T-cell (primary cell): ENCODE measurements at regions of chr19 and their contacts with region 1.

Region 1: DNA sequence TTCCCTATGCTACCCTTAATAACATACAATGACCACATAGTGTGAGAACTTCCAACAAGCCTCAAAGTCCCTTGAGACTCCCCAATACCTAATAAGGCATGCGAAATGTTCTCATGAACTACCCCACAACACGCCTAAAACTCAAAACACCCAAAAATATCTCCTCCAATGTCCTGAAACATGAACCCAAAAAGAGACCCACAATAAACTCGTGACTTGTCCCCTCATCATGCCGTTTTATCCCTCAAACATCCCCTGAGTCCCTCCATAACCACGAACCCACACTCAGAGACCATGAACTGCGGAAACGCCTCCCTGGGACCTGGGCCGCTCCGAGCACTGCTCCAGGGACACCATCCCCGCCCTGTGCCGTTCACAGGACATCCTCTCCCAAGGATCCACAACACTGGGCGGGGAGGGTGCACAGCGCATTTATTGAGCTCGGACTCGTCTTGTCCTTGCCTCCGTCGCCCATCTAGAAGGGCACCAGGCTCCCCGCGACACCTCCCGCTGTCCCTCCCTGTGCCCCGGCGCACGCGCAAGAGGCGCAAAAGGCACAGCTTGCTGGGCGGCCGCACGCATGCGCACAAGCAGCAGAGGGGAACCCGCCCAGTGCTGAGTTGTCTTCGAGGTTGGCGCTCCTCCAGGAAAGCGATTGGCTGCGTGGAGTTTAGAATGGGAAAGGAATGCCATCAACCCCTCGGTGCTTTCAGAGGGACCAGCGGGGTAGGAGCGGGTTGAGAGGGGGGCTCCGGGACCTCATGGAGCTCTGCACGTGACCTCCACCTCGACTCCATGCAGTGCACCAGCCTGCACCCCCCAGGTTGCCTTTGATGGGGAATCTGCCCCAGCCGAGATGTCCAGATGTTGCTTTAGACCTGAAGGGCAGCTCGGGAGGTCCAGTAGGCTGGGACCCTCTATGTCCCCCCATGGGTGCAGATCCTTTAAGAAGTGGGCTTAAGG is 8.8 kb downstream of the FXYD3 start:
- DNase-seq: peak; percentile 62 to 87 (median 78)
- ATAC-seq: peak; percentile 93 to 98 (median 97)
- H3K4me3 ChIP-seq: peak overlapping the region; percentile 35 to 65
- H3K4me3 Mint-ChIP-seq: peak overlapping the region; percentile 79 to 87 (median 81)
- H3K27ac ChIP-seq: peak overlapping the region; percentile 3
- H3K27ac Mint-ChIP-seq: peak overlapping the region; percentile 82 to 86
- H3K4me1 ChIP-seq: peaks cover 0 to 12% of the 10 kb centered on the region in 2 experiments
- H3K4me1 Mint-ChIP-seq: peaks cover 14 to 18% (median 14%) of the 10 kb centered on the region in 3 donors
- H3K27me3 ChIP-seq: peaks cover 0 to 5% of the 10 kb centered on the region in 2 experiments
- H3K27me3 Mint-ChIP-seq: no peaks in the 10 kb centered on the region

Region 2: DNA sequence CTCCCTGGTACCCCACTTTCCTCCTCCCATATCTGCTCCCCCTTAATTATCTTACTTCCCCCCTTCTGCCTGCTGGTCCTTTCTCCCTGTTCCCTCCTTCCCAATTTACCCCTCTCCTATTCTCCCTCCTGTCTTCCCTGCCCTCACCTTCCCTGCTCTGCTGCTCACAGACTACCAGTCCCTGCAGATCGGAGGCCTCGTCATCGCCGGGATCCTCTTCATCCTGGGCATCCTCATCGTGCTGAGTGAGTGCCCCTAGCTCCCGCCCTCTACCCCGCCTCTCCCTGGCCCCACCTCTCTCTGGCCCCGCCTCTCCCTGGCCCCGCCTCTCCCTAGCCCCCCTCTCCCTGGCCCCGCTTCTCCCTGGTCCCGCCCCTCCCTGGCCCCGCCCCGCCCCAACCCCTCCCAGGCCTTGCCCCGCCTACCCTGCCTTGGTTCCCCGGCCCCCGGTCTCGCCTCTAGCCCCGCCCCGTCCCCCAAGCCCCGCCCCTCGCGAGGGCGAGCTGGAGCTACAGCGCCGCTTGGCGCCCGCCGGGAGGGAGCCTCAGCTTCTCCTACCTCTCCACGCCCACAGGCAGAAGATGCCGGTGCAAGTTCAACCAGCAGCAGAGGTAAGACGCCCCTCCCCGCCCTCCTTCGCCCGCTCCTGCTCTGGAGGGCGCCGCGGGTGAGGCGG is 16.7 kb after region 1 on chr19:
- CTCF ChIA-PET with region 1: interaction called, 4 to 18 read pairs
- POLR2A ChIA-PET with region 1: no interaction called
- DNase-seq: peak; percentile 89 to 97 (median 94)
- ATAC-seq: peak; percentile 82 to 89 (median 87)
- H3K4me3 ChIP-seq: peak overlapping the region; percentile 48 to 60
- H3K4me3 Mint-ChIP-seq: peak overlapping the region; percentile 81 to 85 (median 83)
- H3K27ac ChIP-seq: no peak overlapping the region
- H3K27ac Mint-ChIP-seq: peak overlapping the region; percentile 64 to 79
- H3K4me1 ChIP-seq: peaks cover 13 to 50% of the 10 kb centered on the region in 2 experiments
- H3K4me1 Mint-ChIP-seq: peaks cover 38 to 47% (median 40%) of the 10 kb centered on the region in 3 donors
- H3K27me3 ChIP-seq: peaks cover 0 to 29% of the 10 kb centered on the region in 2 experiments
- H3K27me3 Mint-ChIP-seq: peaks cover 0 to 3% of the 10 kb centered on the region in 2 donors

Region 3: GRCh38 chr19:35213663-35214632 is 89.6 kb after region 1 on chr19:
- CTCF ChIA-PET with region 1: no interaction called
- POLR2A ChIA-PET with region 1: no interaction called
- DNase-seq: peak; percentile 47 to 97 (median 79)
- ATAC-seq: peak; percentile 45 to 59 (median 50)
- H3K4me3 ChIP-seq: peak overlapping the region in 1 of 2 donors; percentile 26
- H3K4me3 Mint-ChIP-seq: peak overlapping the region; percentile 47 to 85 (median 58)
- H3K27ac ChIP-seq: peak overlapping the region; percentile 95
- H3K27ac Mint-ChIP-seq: peak overlapping the region; percentile 99 to 100
- H3K4me1 ChIP-seq: peaks cover 25 to 76% of the 10 kb centered on the region in 2 experiments
- H3K4me1 Mint-ChIP-seq: peaks cover 69 to 82% (median 75%) of the 10 kb centered on the region in 3 donors
- H3K27me3 ChIP-seq: no peaks in the 10 kb centered on the region
- H3K27me3 Mint-ChIP-seq: no peaks in the 10 kb centered on the region